ENCODE measurements at regions of chr10 and their contacts with region 1.

Region 1: DNA sequence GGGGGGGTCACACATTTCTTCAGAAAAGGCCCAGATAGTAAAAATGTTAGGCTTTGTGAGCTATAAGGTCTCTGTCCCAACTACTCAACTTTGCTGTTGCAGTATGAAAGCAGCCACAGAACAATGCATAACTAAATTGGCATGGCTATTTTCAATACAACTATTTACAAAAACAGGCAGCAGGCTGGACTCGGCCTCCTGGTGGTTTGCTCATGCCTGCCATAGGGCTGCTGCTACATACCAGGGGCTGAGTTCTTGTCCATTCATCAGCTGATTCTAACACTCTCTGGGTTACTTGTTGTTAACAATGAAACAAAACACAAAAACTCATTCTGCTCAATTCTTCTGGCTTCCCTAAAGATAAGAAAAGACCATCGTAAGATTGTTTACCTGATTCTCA is 109.4 kb upstream of the ADAM12 start:
- DNase-seq: no peak
- H3K4me3 ChIP-seq: no peak overlapping the region
- H3K27ac ChIP-seq: no peak overlapping the region
- H3K4me1 ChIP-seq: no peaks in the 10 kb centered on the region
- H3K27me3 ChIP-seq: no peaks in the 10 kb centered on the region
- CTCF ChIP-seq: no peak
- POLR2A ChIP-seq: no peak

Region 2: DNA sequence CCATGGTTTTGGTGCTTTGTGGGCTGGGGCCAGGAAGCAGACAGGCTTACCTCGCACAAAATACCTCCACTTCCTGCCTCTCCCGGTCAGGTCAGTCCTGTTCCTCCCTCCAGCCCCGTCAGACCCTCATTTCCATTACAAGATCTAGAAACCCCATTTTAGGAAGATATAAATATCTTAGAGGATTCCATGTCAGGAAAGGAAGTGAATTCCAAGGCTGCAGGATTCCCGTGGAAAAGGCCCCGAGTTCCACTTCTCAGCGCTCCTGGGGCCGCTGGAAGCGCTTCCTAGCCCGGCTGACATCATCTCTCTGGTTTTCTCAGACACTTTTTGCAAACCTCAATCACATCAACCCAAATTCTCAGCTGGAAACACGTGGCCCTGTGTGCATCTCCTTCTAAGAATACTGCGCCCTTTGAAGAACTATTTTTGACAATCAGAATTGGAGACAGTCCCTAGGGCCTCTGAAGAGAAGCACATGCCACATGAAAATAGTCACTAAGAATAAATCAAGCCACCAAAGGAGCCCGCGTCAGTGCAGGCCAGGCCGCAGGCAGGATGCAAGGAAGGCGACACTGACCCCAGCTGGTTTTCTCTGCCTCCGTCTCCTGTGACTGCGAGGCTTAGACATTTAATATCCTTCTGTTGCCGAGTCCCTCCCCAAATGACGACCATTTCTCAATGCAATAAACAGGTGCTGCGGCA is 21.6 kb before region 1 on chr10:
- intact Hi-C with region 1: loop called (anchors 2 kb)
- DNase-seq: no peak
- H3K4me3 ChIP-seq: no peak overlapping the region
- H3K27ac ChIP-seq: no peak overlapping the region
- H3K4me1 ChIP-seq: no peaks in the 10 kb centered on the region
- H3K27me3 ChIP-seq: no peaks in the 10 kb centered on the region
- CTCF ChIP-seq: no peak
- POLR2A ChIP-seq: no peak

Region 3: DNA sequence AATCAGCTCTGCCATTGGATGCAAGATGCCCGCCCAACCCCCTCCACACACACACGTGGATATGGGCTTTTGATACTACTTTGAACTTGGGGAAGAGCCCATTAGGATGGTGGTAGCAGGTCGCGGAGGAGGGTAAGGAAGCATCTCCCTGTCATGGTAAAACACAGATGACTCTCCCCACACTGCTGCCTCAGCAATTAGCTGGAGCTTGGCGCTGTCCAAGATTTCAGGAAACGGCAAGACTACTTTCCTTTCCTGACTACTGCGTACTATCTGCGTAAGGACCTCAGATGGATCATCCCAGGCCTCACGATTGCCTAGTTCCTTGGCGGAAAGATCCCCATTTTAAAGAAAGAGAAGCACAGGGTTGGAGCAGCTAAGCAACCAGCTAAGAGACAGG is 38.5 kb after region 1 on chr10:
- intact Hi-C with region 1: no loop called
- DNase-seq: no peak
- H3K4me3 ChIP-seq: no peak overlapping the region
- H3K27ac ChIP-seq: no peak overlapping the region
- H3K4me1 ChIP-seq: no peaks in the 10 kb centered on the region
- H3K27me3 ChIP-seq: no peaks in the 10 kb centered on the region
- CTCF ChIP-seq: no peak
- POLR2A ChIP-seq: no peak